A549 (cell line): ENCODE measurements at regions of chr17 and their contacts with region 1.

Region 1: GRCh38 chr17:81601525-81602120 is 35.3 kb downstream of the NPLOC4 start:
- DNase-seq: peak; percentile 75 to 80
- ATAC-seq: peak; percentile 95 to 97
- H3K4me3 ChIP-seq: no peak overlapping the region
- H3K27ac ChIP-seq: peak overlapping the region; percentile 5 to 63; a peak in 4 of 6 replicates
- H3K4me1 ChIP-seq: peaks cover 9% of the 10 kb centered on the region
- CTCF ChIP-seq: peak; percentile 95
- EP300 ChIP-seq: no peak
- POLR2A ChIP-seq: no peak
- RAD21 ChIP-seq: peak; percentile 94 to 98

Region 2: DNA sequence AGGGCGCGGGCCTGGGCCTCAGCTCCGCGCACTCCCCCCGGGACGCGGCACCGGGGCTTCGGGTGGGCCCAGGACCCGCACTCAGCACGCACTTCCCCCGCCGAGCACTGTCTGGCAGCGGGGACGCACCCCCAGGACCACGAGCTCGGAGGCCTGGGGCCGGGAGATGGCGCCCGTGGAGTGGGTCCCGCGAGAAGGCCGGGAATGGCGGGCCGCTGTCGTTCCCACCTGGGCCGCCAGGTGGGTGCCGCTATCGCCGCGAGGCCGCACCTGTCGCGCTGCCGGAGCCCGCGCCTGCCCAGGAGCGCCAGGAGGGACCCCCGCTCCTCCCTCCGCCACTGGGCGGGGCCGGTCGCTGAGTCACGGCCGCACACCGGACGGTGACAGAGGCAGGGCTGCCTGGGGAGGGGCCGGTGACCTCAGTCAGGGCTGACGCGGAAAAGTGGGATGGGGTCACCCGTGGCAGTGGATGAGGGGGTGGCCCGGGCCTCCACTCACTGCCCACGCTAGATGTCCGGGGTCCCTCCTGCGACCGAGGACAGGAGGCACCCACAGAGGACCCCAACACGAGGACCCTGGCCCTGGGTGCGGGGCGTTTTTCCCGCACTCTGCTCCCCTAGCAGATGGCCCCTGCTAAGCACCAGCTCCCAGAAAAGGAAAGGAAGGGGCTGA is 82.2 kb before region 1 on chr17:
- CTCF ChIA-PET with region 1: interaction called, 65 read pairs
- POLR2A ChIA-PET with region 1: interaction called, 4 read pairs
- DNase-seq: peak; percentile 61 to 66
- ATAC-seq: peak; percentile 42 to 48
- H3K4me3 ChIP-seq: peak overlapping the region; percentile 66
- H3K27ac ChIP-seq: peak overlapping the region; percentile 89 to 99
- H3K4me1 ChIP-seq: peaks cover 43% of the 10 kb centered on the region
- CTCF ChIP-seq: peak; percentile 62
- EP300 ChIP-seq: no peak; a peak in 1 of 5 replicates
- POLR2A ChIP-seq: peak; percentile 3
- RAD21 ChIP-seq: peak; percentile 47 to 67; a peak in 4 of 5 replicates

Region 3: GRCh38 chr17:81537343-81537855 is 64.2 kb before region 1 on chr17:
- CTCF ChIA-PET with region 1: interaction called, 36 read pairs
- POLR2A ChIA-PET with region 1: interaction called, 3 read pairs
- DNase-seq: peak; percentile 67 to 77
- ATAC-seq: peak; percentile 19 to 61; a peak in 5 of 6 replicates
- H3K4me3 ChIP-seq: no peak overlapping the region
- H3K27ac ChIP-seq: no peak overlapping the region
- H3K4me1 ChIP-seq: peaks cover 11% of the 10 kb centered on the region; the same call in 1 of the 3 replicates
- CTCF ChIP-seq: peak; percentile 51
- EP300 ChIP-seq: no peak
- POLR2A ChIP-seq: no peak
- RAD21 ChIP-seq: peak; percentile 59 to 69; a peak in 4 of 5 replicates

Region 4: DNA sequence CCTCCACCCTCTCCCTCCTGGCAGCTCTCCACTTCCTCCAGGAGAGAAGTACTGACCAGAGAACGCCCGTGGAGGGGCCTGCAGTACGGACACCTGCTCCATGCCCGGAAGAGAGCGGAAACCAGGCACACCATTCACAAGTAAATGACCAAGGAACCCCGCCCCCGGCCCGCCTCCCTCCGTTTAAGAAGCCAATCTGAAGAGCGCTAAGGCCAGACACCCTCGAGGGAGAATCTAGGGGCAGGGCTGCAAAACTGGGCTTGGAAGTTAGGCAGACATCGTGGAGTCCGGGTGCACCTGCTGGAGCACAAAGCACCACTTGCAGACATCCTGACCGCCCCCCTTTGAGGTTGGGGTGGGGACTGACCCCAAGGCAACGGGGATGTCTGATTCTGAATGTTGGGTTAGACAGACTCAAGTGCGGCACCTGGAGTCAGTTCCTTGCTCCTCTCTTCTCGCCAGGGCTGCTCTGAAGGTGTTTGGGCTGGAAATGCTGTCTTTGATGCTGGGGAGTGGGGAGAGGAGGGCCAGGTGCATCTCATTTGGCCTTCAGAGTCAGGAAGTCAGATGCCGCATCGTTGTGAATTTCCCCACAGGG is 48.5 kb before region 1 on chr17:
- CTCF ChIA-PET with region 1: interaction called, 1,604 read pairs
- POLR2A ChIA-PET with region 1: interaction called, 4 read pairs
- DNase-seq: peak; percentile 92 to 97
- ATAC-seq: peak; percentile 75 to 84
- H3K4me3 ChIP-seq: peak overlapping the region; percentile 86
- H3K27ac ChIP-seq: peak overlapping the region; percentile 84 to 97
- H3K4me1 ChIP-seq: peaks cover 50% of the 10 kb centered on the region
- CTCF ChIP-seq: no peak
- EP300 ChIP-seq: no peak
- POLR2A ChIP-seq: peak; percentile 75
- RAD21 ChIP-seq: peak in 1 of 2 experiments; percentile 23; a peak in 3 of 5 replicates

Region 5: GRCh38 chr17:81621494-81622130 is 20.0 kb after region 1 on chr17:
- CTCF ChIA-PET with region 1: interaction called, 59 read pairs
- POLR2A ChIA-PET with region 1: no interaction called
- DNase-seq: no peak
- ATAC-seq: peak; percentile 52 to 62; a peak in 4 of 6 replicates
- H3K4me3 ChIP-seq: no peak overlapping the region
- H3K27ac ChIP-seq: no peak overlapping the region
- H3K4me1 ChIP-seq: no peaks in the 10 kb centered on the region
- CTCF ChIP-seq: no peak
- EP300 ChIP-seq: no peak
- POLR2A ChIP-seq: no peak
- RAD21 ChIP-seq: no peak

Region 6: DNA sequence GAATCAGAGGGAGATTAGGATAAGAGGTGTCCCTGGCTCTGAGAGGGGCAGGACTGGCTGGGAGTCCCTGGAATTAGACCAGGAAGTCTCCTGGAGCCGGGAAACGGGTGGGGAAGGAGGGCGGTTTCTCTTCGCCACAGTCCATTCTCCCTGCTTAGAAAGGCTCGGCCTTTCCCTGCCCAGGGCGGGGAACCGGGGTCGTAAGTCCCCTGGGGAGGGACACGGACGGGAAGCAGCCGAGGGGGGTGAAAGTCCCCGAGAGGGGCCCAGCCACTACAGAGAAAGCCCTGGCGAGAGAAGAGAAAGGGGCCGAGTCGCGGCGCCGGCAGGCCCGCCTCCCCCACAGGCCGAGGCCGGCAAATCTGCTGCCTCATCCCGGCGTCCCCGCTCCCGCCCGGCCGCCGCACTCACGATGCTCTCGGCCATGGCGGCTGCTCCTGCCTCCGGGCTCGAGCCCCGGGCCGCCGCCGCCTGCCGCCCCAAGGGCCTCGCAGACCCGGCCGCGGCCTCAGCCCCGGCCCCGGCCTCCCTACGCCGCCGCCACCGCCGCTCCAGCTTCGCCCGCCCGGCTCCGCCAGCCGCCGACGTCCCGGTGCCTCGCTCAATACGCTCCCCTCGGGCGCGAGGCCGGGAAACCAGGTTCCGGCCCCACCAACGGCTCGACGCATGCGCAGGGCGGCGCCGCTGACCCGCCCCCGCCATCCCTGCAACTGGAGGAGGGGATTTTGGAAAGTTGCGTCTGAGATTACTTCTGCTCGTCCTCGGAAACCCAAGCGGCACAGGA is 35.1 kb after region 1 on chr17 and contains the starts of genes NPLOC4 and TSPAN10:
- CTCF ChIA-PET with region 1: interaction called, 20 read pairs
- POLR2A ChIA-PET with region 1: interaction called, 3 read pairs
- DNase-seq: peak; percentile 91 to 98
- ATAC-seq: peak; percentile 82 to 88
- H3K4me3 ChIP-seq: peak within 1 kb of the TSS; percentile 79
- H3K27ac ChIP-seq: peak within 1 kb of the TSS; percentile 97
- H3K4me1 ChIP-seq: peaks cover 20% of the 10 kb centered on the region
- CTCF ChIP-seq: no peak
- EP300 ChIP-seq: no peak; a peak in 1 of 5 replicates
- POLR2A ChIP-seq: peak; percentile 88
- RAD21 ChIP-seq: no peak; a peak in 2 of 5 replicates
- polyA plus RNA-seq, gene NPLOC4: 101 and 130 TPM in 2 replicates
- polyA plus RNA-seq, gene TSPAN10: 1.4 and 1.7 TPM in 2 replicates

Region 7: DNA sequence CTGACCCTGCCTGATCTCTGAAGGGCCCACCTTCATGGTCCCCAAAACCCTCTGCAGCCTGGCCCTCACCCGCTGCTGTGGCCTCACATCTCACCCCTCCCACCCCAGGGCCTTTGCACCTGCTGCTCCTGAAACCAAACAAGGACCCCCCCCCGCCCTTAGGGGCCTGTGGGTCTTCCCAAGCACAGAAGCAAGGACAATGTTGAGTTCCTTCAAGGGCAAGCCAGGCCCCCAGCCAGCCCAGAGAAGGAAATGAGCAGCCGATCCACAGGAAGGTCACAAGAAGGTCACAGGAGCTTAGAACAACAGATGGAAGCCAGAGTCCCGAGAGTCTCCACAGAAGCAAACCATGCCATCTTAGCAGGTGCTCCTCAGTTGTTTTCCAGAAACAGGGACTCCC is 55.2 kb after region 1 on chr17:
- CTCF ChIA-PET with region 1: interaction called, 17 read pairs
- POLR2A ChIA-PET with region 1: no interaction called
- DNase-seq: no peak
- ATAC-seq: no peak
- H3K4me3 ChIP-seq: no peak overlapping the region
- H3K27ac ChIP-seq: no peak overlapping the region
- H3K4me1 ChIP-seq: peaks cover 3% of the 10 kb centered on the region
- CTCF ChIP-seq: no peak
- EP300 ChIP-seq: no peak
- POLR2A ChIP-seq: no peak
- RAD21 ChIP-seq: no peak

Region 8: GRCh38 chr17:82077617-82078358 is 476.2 kb after region 1 on chr17:
- CTCF ChIA-PET with region 1: no interaction called
- POLR2A ChIA-PET with region 1: no interaction called
- DNase-seq: no peak
- ATAC-seq: peak in 1 of 2 experiments; percentile 2; a peak in 3 of 6 replicates
- H3K4me3 ChIP-seq: no peak overlapping the region
- H3K27ac ChIP-seq: no peak overlapping the region
- H3K4me1 ChIP-seq: no peaks in the 10 kb centered on the region
- CTCF ChIP-seq: no peak
- EP300 ChIP-seq: no peak
- POLR2A ChIP-seq: no peak
- RAD21 ChIP-seq: no peak